ENCODE measurements at regions of chr6 and their contacts with region 1.

Region 1: DNA sequence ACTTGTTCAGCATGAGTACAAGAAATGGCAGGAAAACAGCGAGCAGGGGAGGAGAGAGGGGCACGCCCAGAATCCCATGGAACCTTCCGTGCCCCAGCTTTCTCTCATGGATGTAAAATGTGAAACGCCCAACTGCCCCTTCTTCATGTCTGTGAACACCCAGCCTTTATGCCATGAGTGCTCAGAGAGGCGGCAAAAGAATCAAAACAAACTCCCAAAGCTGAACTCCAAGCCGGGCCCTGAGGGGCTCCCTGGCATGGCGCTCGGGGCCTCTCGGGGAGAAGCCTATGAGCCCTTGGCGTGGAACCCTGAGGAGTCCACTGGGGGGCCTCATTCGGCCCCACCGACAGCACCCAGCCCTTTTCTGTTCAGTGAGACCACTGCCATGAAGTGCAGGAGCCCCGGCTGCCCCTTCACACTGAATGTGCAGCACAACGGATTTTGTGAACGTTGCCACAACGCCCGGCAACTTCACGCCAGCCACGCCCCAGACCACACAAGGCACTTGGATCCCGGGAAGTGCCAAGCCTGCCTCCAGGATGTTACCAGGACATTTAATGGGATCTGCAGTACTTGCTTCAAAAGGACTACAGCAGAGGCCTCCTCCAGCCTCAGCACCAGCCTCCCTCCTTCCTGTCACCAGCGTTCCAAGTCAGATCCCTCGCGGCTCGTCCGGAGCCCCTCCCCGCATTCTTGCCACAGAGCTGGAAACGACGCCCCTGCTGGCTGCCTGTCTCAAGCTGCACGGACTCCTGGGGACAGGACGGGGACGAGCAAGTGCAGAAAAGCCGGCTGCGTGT is 11.6 kb downstream of the TNFAIP3 start:
- DNase-seq: no peak
- ATAC-seq: peak; percentile 4; the same call in 2 of the 3 replicates
- H3K4me3 ChIP-seq: peak overlapping the region; percentile 56; the same call in 1 of the 2 replicates
- H3K27ac ChIP-seq: peak overlapping the region; percentile 9; the same call in 1 of the 2 replicates
- H3K4me1 ChIP-seq: peaks cover 10% of the 10 kb centered on the region; the same call in 1 of the 2 replicates
- H3K27me3 ChIP-seq: no peaks in the 10 kb centered on the region
- CTCF ChIP-seq: no peak; a peak in 2 of 6 replicates
- EP300 ChIP-seq: no peak
- POLR2A ChIP-seq: peak; percentile 53; the same call in 1 of the 2 replicates
- RAD21 ChIP-seq: no peak

Region 2: DNA sequence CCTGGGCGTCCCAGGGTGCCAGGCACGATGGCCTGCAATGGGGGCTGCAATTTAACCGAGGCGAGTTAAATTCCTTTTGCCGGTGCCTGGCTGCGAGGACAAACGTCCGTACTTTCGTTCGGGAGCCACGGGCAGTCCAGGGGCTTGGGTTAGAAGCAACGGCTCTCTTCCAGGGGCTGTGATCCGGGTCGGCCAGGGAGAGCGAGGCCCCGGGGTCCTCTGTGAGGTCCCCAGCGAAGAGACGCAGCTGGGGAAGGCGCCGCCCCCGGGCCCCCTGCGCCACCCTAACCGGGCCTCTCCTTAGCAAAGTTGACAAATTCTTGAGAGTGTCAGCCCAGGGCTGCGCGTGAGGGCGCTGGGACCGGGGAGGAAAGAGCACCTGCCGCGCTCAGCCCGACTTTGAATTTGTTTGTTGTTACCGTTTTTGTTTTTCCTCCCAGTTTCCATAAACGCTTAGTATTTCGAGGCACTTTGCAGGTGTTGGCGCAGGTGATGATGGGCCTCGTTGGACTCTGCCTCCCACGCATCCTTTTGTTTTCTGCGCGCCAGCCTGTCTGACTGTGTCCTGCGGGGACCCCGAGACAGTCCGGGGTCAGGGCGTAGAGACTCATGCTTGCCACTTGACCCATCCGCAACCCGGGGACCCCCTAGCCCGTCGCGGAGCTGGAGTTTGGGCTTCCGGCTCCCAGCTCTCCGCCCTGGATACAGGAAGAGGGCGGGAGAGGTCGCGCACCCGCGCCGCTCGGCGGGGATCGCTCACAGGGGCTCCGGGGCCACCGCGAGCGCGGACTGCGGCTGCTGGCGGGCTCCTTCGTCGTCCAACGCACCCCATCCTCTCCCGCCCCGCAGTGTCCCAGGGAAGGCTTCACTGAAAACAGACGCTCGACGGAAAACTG is 390.3 kb before region 1 on chr6:
- CTCF ChIA-PET with region 1: no interaction called
- POLR2A ChIA-PET with region 1: no interaction called
- RAD21 ChIA-PET with region 1: no interaction called
- SMC1A ChIA-PET with region 1: no interaction called
- in situ Hi-C with region 1: no loop called
- intact Hi-C with region 1: no loop called
- DNase-seq: no peak
- ATAC-seq: no peak
- H3K4me3 ChIP-seq: no peak overlapping the region
- H3K27ac ChIP-seq: no peak overlapping the region
- H3K4me1 ChIP-seq: no peaks in the 10 kb centered on the region
- H3K27me3 ChIP-seq: peaks cover 31 to 44% of the 10 kb centered on the region in 2 experiments
- CTCF ChIP-seq: no peak
- EP300 ChIP-seq: no peak
- POLR2A ChIP-seq: no peak
- RAD21 ChIP-seq: no peak

Region 3: DNA sequence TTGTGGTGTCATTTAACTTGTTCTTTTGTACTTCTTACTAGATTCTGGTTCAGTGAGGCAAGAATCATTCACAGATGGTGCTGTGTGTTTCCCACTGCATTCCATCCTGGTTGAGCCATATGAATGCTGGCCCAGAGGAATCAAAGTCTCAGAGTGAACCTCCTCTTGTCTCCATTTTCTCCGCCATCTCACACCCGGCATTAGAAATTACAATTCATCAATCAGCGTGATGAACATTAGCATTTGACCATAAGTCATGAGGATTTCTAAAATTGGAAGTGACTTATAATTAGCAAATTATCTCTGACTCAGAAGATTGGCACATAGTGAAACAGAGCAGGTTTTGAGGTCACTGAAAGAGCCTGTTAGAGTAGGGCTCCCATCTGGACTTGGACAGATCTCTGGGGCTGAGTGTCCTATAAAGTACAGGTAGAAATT is 13.6 kb after region 1 on chr6:
- CTCF ChIA-PET with region 1: interaction called, 14 read pairs
- POLR2A ChIA-PET with region 1: interaction called, 6 read pairs
- RAD21 ChIA-PET with region 1: interaction called, 5 read pairs
- SMC1A ChIA-PET with region 1: interaction called, 70 read pairs
- in situ Hi-C with region 1: no loop called
- intact Hi-C with region 1: no loop called
- DNase-seq: no peak
- ATAC-seq: peak; percentile 91
- H3K4me3 ChIP-seq: no peak overlapping the region
- H3K27ac ChIP-seq: no peak overlapping the region
- H3K4me1 ChIP-seq: no peaks in the 10 kb centered on the region
- H3K27me3 ChIP-seq: no peaks in the 10 kb centered on the region
- CTCF ChIP-seq: no peak
- EP300 ChIP-seq: no peak
- POLR2A ChIP-seq: no peak
- RAD21 ChIP-seq: no peak

Region 4: GRCh38 chr6:137903933-137904821 is 25.5 kb after region 1 on chr6:
- CTCF ChIA-PET with region 1: interaction called, 64 read pairs
- POLR2A ChIA-PET with region 1: interaction called, 7 read pairs
- RAD21 ChIA-PET with region 1: interaction called, 29 read pairs
- SMC1A ChIA-PET with region 1: interaction called, 112 read pairs
- in situ Hi-C with region 1: no loop called
- intact Hi-C with region 1: loop called (anchors 1 kb)
- DNase-seq: no peak
- ATAC-seq: peak; percentile 79
- H3K4me3 ChIP-seq: peak overlapping the region; percentile 54; the same call in 1 of the 2 replicates
- H3K27ac ChIP-seq: peak overlapping the region; percentile 95
- H3K4me1 ChIP-seq: peaks cover 23% of the 10 kb centered on the region
- H3K27me3 ChIP-seq: no peaks in the 10 kb centered on the region
- CTCF ChIP-seq: no peak
- EP300 ChIP-seq: peak; percentile 69 to 72; a peak in 2 of 4 replicates
- POLR2A ChIP-seq: peak; percentile 41
- RAD21 ChIP-seq: peak; percentile 22; the same call in 1 of the 2 replicates

Region 5: GRCh38 chr6:137910424-137910834 is 31.7 kb after region 1 on chr6:
- CTCF ChIA-PET with region 1: interaction called, 64 read pairs
- POLR2A ChIA-PET with region 1: interaction called, 36 read pairs
- RAD21 ChIA-PET with region 1: interaction called, 62 read pairs
- SMC1A ChIA-PET with region 1: interaction called, 112 read pairs
- in situ Hi-C with region 1: no loop called
- intact Hi-C with region 1: loop called (anchors 1 kb)
- DNase-seq: no peak
- ATAC-seq: no peak
- H3K4me3 ChIP-seq: no peak overlapping the region
- H3K27ac ChIP-seq: peak overlapping the region; percentile 95
- H3K4me1 ChIP-seq: peaks cover 48% of the 10 kb centered on the region
- H3K27me3 ChIP-seq: no peaks in the 10 kb centered on the region
- CTCF ChIP-seq: no peak
- EP300 ChIP-seq: no peak
- POLR2A ChIP-seq: no peak
- RAD21 ChIP-seq: no peak

Region 6: GRCh38 chr6:137927777-137928218 is 49.1 kb after region 1 on chr6:
- CTCF ChIA-PET with region 1: interaction called, 65 read pairs
- POLR2A ChIA-PET with region 1: interaction called, 18 read pairs
- RAD21 ChIA-PET with region 1: interaction called, 75 read pairs
- SMC1A ChIA-PET with region 1: interaction called, 1,237 read pairs
- in situ Hi-C with region 1: no loop called
- intact Hi-C with region 1: loop called (anchors 5 kb)
- DNase-seq: peak; percentile 99
- ATAC-seq: peak; percentile 93
- H3K4me3 ChIP-seq: peak overlapping the region; percentile 19; the same call in 1 of the 2 replicates
- H3K27ac ChIP-seq: peak overlapping the region; percentile 98
- H3K4me1 ChIP-seq: peaks cover 61% of the 10 kb centered on the region
- H3K27me3 ChIP-seq: no peaks in the 10 kb centered on the region
- CTCF ChIP-seq: no peak
- EP300 ChIP-seq: peak; percentile 91; a peak in 3 of 4 replicates
- POLR2A ChIP-seq: peak; percentile 69; the same call in 1 of the 2 replicates
- RAD21 ChIP-seq: 0 out of 2 replicates have a peak, but pooled peaks have one; percentile 4

Region 7: DNA sequence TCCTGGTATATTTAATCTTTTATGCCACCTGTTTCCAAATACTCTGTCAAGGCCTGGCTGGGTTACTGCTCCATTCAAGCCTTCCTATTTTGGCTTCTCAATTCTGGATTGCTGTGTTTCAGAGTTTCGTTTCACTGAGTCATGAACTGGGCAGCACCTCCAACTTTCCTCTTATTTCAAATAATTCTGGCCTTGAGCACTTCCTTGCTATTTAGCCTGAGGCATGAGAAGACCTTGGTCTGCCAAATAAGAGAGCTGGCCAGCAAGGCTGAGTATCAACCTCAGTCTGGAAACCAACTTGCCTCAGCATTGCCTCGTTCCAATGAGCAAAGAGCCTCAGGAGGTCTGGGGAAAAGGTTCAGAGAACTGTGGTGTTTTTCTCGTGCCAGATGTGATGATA is 55.0 kb after region 1 on chr6:
- CTCF ChIA-PET with region 1: interaction called, 712 read pairs
- POLR2A ChIA-PET with region 1: interaction called, 41 read pairs
- RAD21 ChIA-PET with region 1: interaction called, 774 read pairs
- SMC1A ChIA-PET with region 1: interaction called, 1,237 read pairs
- in situ Hi-C with region 1: no loop called
- intact Hi-C with region 1: loop called (anchors 5 kb)
- DNase-seq: no peak
- ATAC-seq: no peak
- H3K4me3 ChIP-seq: no peak overlapping the region
- H3K27ac ChIP-seq: peak overlapping the region; percentile 53
- H3K4me1 ChIP-seq: peaks cover 28% of the 10 kb centered on the region
- H3K27me3 ChIP-seq: no peaks in the 10 kb centered on the region
- CTCF ChIP-seq: no peak
- EP300 ChIP-seq: no peak
- POLR2A ChIP-seq: no peak
- RAD21 ChIP-seq: no peak

Region 8: GRCh38 chr6:137975188-137975940 is 96.7 kb after region 1 on chr6:
- CTCF ChIA-PET with region 1: interaction called, 70 read pairs
- POLR2A ChIA-PET with region 1: no interaction called
- RAD21 ChIA-PET with region 1: interaction called, 14 read pairs
- SMC1A ChIA-PET with region 1: interaction called, 11 read pairs
- in situ Hi-C with region 1: no loop called
- intact Hi-C with region 1: no loop called
- DNase-seq: peak; percentile 53
- ATAC-seq: peak; percentile 67
- H3K4me3 ChIP-seq: peak overlapping the region; percentile 1; the same call in 1 of the 2 replicates
- H3K27ac ChIP-seq: peak overlapping the region; percentile 34
- H3K4me1 ChIP-seq: peaks cover 36% of the 10 kb centered on the region
- H3K27me3 ChIP-seq: no peaks in the 10 kb centered on the region
- CTCF ChIP-seq: peak; percentile 23 to 62 (median 44); a peak in 5 of 6 replicates
- EP300 ChIP-seq: no peak
- POLR2A ChIP-seq: no peak
- RAD21 ChIP-seq: peak; percentile 81

Region 9: GRCh38 chr6:138103871-138104270 is 225.2 kb after region 1 on chr6:
- CTCF ChIA-PET with region 1: no interaction called
- POLR2A ChIA-PET with region 1: no interaction called
- RAD21 ChIA-PET with region 1: no interaction called
- SMC1A ChIA-PET with region 1: no interaction called
- in situ Hi-C with region 1: no loop called
- intact Hi-C with region 1: no loop called
- DNase-seq: no peak
- ATAC-seq: no peak
- H3K4me3 ChIP-seq: no peak overlapping the region
- H3K27ac ChIP-seq: no peak overlapping the region
- H3K4me1 ChIP-seq: 0 out of 2 replicates have a peak, but pooled peaks cover 5% of the 10 kb centered on the region
- H3K27me3 ChIP-seq: peaks cover 2 to 29% of the 10 kb centered on the region in 2 experiments
- CTCF ChIP-seq: no peak
- EP300 ChIP-seq: no peak
- POLR2A ChIP-seq: no peak
- RAD21 ChIP-seq: no peak